ENCODE measurements at regions of chr11 and their contacts with region 1.

Region 1: GRCh38 chr11:7665473-7666291 is 7.6 kb downstream of the CYB5R2 start:
- DNase-seq: peak; percentile 68 to 87
- H3K4me3 ChIP-seq: no peak overlapping the region
- H3K27ac ChIP-seq: no peak overlapping the region
- H3K4me1 ChIP-seq: no peaks in the 10 kb centered on the region
- H3K27me3 ChIP-seq: no peaks in the 10 kb centered on the region
- CTCF ChIP-seq: peak; percentile 76 to 91 (median 88)
- POLR2A ChIP-seq: no peak

Region 2: DNA sequence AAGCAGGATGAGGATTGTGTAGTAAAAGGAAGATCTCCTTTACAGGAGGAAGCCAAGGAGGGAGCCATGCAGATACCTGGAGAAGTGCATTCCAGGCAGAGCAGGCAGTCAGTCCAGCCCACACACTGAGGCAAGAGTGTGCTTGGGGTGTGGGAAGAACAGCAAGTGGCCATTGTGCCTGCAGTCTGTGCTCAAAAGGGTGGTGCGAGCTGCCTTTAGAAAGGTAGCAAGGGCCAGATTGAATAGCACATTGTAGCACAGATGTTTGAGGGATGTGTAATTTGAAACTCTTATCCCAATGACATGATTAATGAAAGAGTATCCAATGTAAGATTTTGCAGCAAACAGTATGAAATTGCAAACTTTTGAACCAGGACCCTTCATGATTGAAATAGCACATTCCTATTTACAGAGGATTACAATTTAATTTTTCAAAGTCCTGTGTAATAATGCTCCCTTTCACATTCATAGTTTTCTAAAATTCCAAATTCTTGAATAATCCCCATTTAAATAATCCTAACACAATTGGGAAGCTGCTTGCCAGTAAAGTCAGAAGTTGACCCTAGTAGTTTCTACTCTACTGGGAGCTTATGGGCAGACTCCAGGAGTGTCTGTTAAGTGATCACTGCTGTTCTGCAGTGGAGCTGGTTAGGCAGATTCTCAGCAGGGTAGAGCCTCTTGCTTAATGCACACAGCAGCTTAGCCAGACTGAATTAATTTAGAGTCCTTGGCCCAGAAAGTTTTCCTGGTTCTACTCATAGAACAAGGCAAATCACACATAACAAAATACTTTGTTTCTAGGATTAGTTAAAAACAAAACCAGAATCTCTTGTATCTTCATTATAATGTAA is 70.4 kb before region 1 on chr11:
- intact Hi-C with region 1: loop called (anchors 2 kb)
- DNase-seq: no peak
- H3K4me3 ChIP-seq: no peak overlapping the region
- H3K27ac ChIP-seq: peak overlapping the region; percentile 79 to 88
- H3K4me1 ChIP-seq: peaks cover 4 to 26% of the 10 kb centered on the region in 2 donors
- H3K27me3 ChIP-seq: no peaks in the 10 kb centered on the region
- CTCF ChIP-seq: no peak
- POLR2A ChIP-seq: no peak

Region 3: GRCh38 chr11:7635137-7635536 is 30.5 kb before region 1 on chr11:
- intact Hi-C with region 1: no loop called
- DNase-seq: no peak
- H3K4me3 ChIP-seq: no peak overlapping the region
- H3K27ac ChIP-seq: no peak overlapping the region
- H3K4me1 ChIP-seq: no peaks in the 10 kb centered on the region
- H3K27me3 ChIP-seq: no peaks in the 10 kb centered on the region
- CTCF ChIP-seq: no peak
- POLR2A ChIP-seq: no peak